ENCODE measurements at regions of chr12 and their contacts with region 1.

Region 1: DNA sequence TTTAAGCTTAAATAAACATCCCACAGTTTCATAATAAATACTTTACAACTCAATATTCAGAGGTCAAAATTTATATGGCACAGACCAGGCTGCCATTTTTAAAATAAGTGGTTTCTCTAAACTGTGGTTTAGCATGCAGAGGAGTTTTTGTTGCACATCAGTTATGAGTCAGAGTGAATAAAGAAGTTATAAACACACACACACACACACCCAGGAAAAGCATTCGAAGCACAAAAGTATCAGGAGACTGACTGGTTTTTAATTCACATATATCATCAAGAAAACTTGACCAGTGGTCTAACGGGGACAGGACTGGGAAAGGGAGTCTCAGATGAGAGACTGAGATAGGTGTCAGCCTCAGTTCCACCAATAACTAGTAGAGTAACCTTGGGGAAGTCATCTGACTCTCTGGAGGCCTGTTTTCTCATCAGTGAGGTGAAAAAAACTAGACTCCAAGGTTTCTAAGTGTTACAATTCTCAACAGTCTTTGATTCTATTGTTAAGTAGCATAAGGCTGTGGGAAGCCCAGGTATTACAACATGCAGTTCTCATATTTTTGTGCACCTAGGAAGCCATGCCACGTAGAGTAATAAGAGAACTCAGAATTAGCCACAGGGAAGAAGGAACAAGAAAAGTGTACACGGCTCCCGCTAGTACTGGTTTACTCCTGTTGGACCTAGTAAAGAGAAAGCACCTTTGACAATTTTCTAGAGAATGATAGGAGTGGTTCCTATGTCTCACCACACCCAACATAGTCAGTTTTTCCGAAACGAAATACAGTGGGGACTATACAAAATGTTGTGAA is 5.2 kb downstream of the PPTC7 start:
- DNase-seq: peak; percentile 99
- ATAC-seq: peak; percentile 70
- H3K4me3 ChIP-seq: peak overlapping the region; percentile 64
- H3K27ac ChIP-seq: peak overlapping the region; percentile 96
- H3K4me1 ChIP-seq: peaks cover 51% of the 10 kb centered on the region
- H3K27me3 ChIP-seq: no peaks in the 10 kb centered on the region
- CTCF ChIP-seq: no peak

Region 2: DNA sequence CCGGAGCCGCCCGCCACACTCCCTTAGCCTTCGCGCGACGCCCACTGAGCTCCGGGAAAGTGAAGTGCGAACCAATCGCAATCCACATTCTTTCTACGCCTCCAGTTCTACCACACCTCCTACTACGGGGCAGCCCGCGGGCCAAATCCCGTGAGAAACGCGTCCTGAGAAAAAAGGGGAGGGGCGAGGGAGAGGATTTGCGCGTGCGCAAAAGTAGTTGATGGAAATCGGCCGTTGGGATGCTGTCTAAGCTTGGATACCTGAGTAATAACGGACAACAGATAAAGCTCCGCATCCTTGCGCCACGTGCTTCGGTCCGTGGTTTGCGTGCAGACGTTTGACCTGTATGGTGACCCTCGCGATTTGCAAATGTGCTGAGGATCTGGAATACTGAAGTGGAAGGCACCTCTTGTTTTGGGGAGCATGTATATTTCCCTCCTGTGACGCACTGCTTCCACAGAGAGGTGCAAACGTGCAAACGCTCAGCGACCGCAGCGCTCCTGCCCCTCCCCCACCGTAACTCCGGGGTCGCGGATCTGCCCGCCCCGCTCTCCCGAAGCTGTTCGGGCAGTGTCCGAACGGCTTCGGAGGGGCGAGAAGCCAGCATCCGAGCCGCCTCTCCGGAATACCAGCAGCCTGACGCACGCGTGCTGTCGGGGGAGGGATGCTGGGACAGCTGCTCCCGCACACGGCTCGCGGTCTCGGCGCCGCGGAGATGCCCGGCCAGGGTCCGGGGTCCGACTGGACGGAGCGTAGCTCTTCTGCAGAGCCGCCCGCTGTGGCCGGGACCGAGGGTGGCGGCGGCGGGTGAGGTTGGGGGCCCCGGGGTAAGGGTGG is 109.5 kb before region 1 on chr12 and contains the starts of genes FAM216A and GPN3:
- CTCF ChIA-PET with region 1: interaction called, 3 read pairs
- POLR2A ChIA-PET with region 1: no interaction called
- intact Hi-C with region 1: loop called (anchors 1 kb)
- DNase-seq: peak; percentile 99
- ATAC-seq: peak; percentile 84
- H3K4me3 ChIP-seq: peak within 1 kb of the TSS; percentile 84
- H3K27ac ChIP-seq: peak within 1 kb of the TSS; percentile 75
- H3K4me1 ChIP-seq: peaks cover 14% of the 10 kb centered on the region
- H3K27me3 ChIP-seq: no peaks in the 10 kb centered on the region
- CTCF ChIP-seq: no peak
- total RNA-seq, gene FAM216A: 19.5 and 27.8 TPM in 2 replicates
- total RNA-seq, gene GPN3: 31.4 and 32.5 TPM in 2 replicates

Region 3: DNA sequence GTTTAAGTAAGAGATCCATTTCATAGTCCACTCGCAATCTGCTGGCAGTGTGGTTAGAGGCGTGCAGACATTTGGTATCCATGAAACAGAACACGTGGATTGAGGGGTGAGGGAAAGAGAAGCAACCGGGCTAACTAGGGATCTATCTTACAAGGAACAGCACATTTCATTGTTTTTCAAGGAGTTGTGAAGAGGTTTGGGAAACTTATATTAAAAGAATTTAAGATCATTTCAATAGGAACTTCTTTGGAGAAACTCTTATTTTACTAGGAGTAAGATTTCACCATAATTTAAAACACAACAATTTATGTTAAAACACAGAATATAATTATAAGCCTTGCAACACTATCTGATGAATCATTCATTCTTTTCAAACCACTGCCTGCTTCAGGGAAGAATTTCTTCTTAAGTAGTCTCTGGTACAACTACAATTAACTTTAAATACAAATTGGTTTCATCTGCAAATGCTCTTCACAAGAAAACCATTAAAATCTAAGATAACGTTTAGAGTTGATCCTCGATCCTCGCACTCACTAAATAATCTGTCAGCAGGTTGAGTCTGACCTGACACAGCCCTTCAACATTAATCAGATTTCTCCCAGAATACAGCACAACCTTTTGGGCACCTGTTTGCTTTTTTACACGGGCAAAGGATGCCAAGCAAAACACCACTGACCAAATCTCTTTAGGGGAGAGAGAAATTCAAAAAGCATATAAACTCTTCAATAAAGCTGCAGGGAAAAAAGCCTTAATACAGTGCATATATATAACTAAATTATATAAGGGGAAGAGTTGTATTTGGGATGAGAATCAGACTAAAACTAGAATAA is 22.1 kb before region 1 on chr12:
- CTCF ChIA-PET with region 1: no interaction called
- POLR2A ChIA-PET with region 1: no interaction called
- intact Hi-C with region 1: loop called (anchors 1 kb)
- DNase-seq: peak; percentile 32
- ATAC-seq: no peak
- H3K4me3 ChIP-seq: no peak overlapping the region
- H3K27ac ChIP-seq: no peak overlapping the region
- H3K4me1 ChIP-seq: peaks cover 20% of the 10 kb centered on the region
- H3K27me3 ChIP-seq: no peaks in the 10 kb centered on the region
- CTCF ChIP-seq: no peak

Region 4: GRCh38 chr12:110563702-110564640 is 13.9 kb before region 1 on chr12:
- CTCF ChIA-PET with region 1: interaction called, 3 read pairs
- POLR2A ChIA-PET with region 1: interaction called, 3 read pairs
- intact Hi-C with region 1: loop called (anchors 1 kb)
- DNase-seq: peak; percentile 19
- ATAC-seq: no peak
- H3K4me3 ChIP-seq: no peak overlapping the region
- H3K27ac ChIP-seq: 0 out of 2 replicates have a peak overlapping the region, but pooled peaks have one; percentile 0
- H3K4me1 ChIP-seq: peaks cover 46% of the 10 kb centered on the region
- H3K27me3 ChIP-seq: no peaks in the 10 kb centered on the region
- CTCF ChIP-seq: no peak

Region 5: GRCh38 chr12:110627500-110628195 is 49.7 kb after region 1 on chr12:
- CTCF ChIA-PET with region 1: no interaction called
- POLR2A ChIA-PET with region 1: no interaction called
- intact Hi-C with region 1: no loop called
- DNase-seq: no peak
- ATAC-seq: no peak
- H3K4me3 ChIP-seq: no peak overlapping the region
- H3K27ac ChIP-seq: no peak overlapping the region
- H3K4me1 ChIP-seq: no peaks in the 10 kb centered on the region
- H3K27me3 ChIP-seq: no peaks in the 10 kb centered on the region
- CTCF ChIP-seq: no peak

Region 6: DNA sequence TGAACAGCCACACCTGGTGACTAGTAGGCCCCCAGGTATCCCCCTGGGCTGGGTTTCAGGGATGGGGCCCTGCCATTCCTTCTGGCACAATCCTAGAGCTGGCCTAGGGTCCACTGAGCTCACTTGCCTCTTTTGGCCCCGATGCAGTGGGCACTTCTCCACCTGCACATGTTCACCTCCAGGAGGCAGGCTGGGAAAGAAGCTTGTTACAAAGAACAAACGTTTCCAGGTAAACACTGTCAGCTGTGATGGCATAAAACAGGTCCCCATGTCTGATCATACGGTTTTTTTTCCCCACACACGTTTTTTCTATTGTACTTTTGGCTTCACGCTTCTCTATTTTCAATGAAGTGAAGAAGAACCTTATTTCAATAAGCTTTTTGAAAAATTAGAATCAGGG is 126.8 kb after region 1 on chr12:
- CTCF ChIA-PET with region 1: no interaction called
- POLR2A ChIA-PET with region 1: interaction called, 27 read pairs
- intact Hi-C with region 1: no loop called
- DNase-seq: peak; percentile 68
- ATAC-seq: peak; percentile 86
- H3K4me3 ChIP-seq: peak overlapping the region; percentile 7; the same call in 1 of the 2 replicates
- H3K27ac ChIP-seq: no peak overlapping the region
- H3K4me1 ChIP-seq: 0 out of 2 replicates have a peak, but pooled peaks cover 3% of the 10 kb centered on the region
- H3K27me3 ChIP-seq: no peaks in the 10 kb centered on the region
- CTCF ChIP-seq: peak; percentile 82

Measured in PC-3 (cell line).